ENCODE measurements at regions of chr6 and their contacts with region 1.

Region 1: DNA sequence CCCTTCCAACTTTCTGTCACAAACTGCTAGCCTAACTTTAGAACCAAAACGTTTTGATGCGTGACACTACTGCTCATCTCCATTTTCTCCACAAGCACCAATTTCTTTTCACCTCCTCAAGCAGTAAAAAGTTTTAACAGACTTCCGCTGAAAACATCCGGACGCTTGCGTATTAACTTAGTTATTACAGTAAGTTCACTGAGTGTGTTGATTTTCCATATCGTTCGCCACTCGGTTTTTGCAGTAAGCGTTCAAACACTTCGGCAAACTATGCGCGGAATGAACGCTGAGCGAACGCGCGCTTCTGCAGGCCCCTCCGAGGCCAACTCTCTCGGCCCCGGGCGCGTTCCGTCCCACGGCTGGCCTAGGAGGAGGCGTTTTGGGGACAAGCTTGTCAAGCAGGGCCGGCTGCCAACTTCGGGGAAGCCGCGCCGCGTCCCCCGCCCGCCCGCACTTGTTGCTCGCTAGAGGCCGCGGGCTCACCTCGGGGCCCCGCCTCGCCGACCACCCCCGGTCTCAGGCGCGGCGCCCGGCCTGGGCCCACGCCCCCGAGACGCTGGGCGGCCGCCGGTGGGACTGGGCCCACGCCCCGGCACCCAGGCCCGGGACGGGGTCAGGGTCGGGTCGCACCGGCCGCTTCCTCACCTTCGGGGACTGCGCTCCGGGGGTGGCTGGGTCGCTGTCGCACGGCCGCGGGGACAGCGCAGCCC is 945 bp downstream of the PHF10 start:
- DNase-seq: peak in 1 of 2 experiments; percentile 71
- H3K4me3 ChIP-seq: peak overlapping the region; percentile 76 to 78 (median 76)
- H3K27ac ChIP-seq: no peak overlapping the region
- H3K4me1 ChIP-seq: peaks cover 0 to 9% (median 4%) of the 10 kb centered on the region in 4 experiments; a peak in 5 of 7 replicates
- H3K27me3 ChIP-seq: peaks cover 0 to 2% (median under 1%) of the 10 kb centered on the region in 4 experiments; a peak in 1 of 7 replicates
- CTCF ChIP-seq: no peak
- EP300 ChIP-seq: no peak
- POLR2A ChIP-seq: 0 out of 3 replicates have a peak, but pooled peaks of 1 of the 2 experiments have one; percentile 12
- RAD21 ChIP-seq: no peak

Region 2: DNA sequence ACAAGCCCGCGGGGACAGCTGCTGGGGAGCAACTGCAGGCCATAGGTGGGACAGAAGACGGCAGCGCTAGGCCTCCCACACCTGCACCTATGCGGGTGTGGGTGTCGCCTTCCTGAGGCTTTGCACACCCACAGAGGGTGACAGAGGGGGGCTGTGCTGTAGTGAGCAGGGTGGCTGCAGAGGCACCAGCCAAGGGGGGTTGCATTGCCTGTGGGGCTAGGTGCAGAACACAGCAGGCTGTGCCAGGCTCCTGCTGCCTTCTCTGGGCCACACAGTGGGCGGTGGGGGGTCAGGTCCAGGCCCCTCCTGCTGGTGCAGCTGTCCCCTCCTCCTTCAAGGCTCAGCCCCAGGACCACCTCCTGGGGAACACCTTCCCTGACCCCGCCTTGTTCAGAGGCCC is 97.2 kb before region 1 on chr6:
- CTCF ChIA-PET with region 1: no interaction called
- POLR2A ChIA-PET with region 1: no interaction called
- DNase-seq: no peak
- H3K4me3 ChIP-seq: no peak overlapping the region
- H3K27ac ChIP-seq: no peak overlapping the region
- H3K4me1 ChIP-seq: peaks cover 1 to 8% (median 6%) of the 10 kb centered on the region in 4 experiments; a peak in 6 of 7 replicates
- H3K27me3 ChIP-seq: no peaks in the 10 kb centered on the region
- CTCF ChIP-seq: no peak
- EP300 ChIP-seq: no peak
- POLR2A ChIP-seq: no peak
- RAD21 ChIP-seq: no peak

Region 3: GRCh38 chr6:169701954-169702839 is 21.2 kb before region 1 on chr6 and contains the starts of genes C6orf120 and WDR27:
- CTCF ChIA-PET with region 1: interaction called, 6 read pairs
- POLR2A ChIA-PET with region 1: interaction called, 58 read pairs
- DNase-seq: peak; percentile 79 to 96
- H3K4me3 ChIP-seq: peak within 1 kb of the TSS; percentile 79 to 96 (median 94)
- H3K27ac ChIP-seq: peak within 1 kb of the TSS; percentile 88
- H3K4me1 ChIP-seq: peaks cover 0 to 16% (median 5%) of the 10 kb centered on the region in 4 experiments; a peak in 2 of 7 replicates
- H3K27me3 ChIP-seq: no peaks in the 10 kb centered on the region
- CTCF ChIP-seq: no peak
- EP300 ChIP-seq: no peak
- POLR2A ChIP-seq: peak; percentile 32 to 87
- RAD21 ChIP-seq: no peak
- total RNA-seq, gene C6orf120: 29.1 and 30.6 TPM in 2 replicates
- total RNA-seq, gene WDR27: 64.7 and 68.6 TPM in 2 replicates

Measured in H1 (cell line).